Activated naive CD4-positive, alpha-beta T cell treated with anti-CD3 and anti-CD28 coated beads, Interleukin-2, amount 10 ng/mL, durations not matched to agents 7 days and 5 days (primary cell): ENCODE measurements at regions of chr19 and their contacts with region 1.

Region 1: DNA sequence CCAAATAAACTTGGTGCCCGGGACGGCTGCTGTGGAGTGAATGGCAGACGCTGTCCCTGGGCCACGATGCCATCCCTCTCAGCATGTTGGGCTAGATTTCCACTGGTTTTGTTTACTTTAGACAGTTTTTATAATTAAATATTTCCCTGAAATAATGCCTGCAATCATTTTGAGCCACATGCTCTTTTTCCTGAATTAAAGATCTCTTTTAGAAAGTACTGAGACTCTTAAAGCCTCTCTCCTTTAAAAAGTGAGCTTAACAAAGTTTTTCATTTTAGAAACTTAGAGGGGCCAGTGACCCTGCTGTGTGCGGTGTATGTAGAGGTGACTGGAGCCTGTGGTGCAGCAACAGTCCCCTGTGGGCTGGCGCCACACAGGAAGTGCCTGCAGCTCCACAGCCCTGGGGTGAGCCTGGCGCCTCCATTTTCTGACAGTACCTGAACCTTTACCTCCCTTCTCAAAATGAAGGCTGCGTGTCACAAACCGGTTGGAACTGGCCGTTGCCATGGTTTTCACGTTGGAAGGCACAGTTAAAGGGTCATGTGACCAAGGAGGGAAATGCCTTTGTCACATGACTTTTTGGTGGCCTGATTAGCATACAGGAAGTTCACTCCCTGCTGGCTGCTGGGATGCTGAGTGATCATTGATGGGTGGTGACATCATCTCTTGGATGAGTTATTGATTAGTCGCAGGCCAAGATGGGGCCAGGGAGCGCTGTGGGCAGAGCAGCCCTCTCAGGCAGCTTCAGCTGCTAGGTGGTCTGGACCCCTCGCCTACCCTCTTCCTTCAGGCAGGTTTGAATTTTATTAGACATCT is 26.3 kb downstream of the TSSK6 start:
- DNase-seq: peak; percentile 97
- H3K4me3 Mint-ChIP-seq: peak overlapping the region; percentile 54
- H3K27ac Mint-ChIP-seq: peak overlapping the region; percentile 99
- H3K4me1 Mint-ChIP-seq: peaks cover 52% of the 10 kb centered on the region
- H3K27me3 Mint-ChIP-seq: no peaks in the 10 kb centered on the region

Region 2: DNA sequence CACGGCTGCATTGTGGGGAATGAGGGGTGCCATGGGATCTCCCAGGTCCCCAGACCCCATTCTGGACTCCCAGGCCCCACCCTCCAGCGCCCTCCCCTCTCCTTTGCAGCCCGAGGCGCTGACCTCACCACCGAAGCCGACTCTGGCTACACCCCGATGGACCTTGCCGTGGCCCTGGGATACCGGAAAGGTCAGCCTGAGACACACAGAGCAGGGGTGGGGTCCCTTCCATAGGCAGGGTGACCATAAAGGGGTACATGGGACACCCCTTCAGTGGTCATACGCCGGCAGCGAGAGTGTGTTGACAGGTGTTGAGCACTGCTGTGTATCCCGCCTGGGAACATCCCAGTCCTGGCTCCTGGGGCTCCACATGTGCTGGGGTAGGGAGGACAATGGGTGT is 290.0 kb before region 1 on chr19:
- CTCF ChIA-PET with region 1: no interaction called
- DNase-seq: no peak
- H3K4me3 Mint-ChIP-seq: no peak overlapping the region
- H3K27ac Mint-ChIP-seq: no peak overlapping the region
- H3K4me1 Mint-ChIP-seq: peaks cover 33% of the 10 kb centered on the region
- H3K27me3 Mint-ChIP-seq: no peaks in the 10 kb centered on the region

Region 3: GRCh38 chr19:19361075-19361594 is 127.9 kb before region 1 on chr19:
- CTCF ChIA-PET with region 1: interaction called, 89 read pairs
- DNase-seq: peak; percentile 84
- H3K4me3 Mint-ChIP-seq: no peak overlapping the region
- H3K27ac Mint-ChIP-seq: peak overlapping the region; percentile 81
- H3K4me1 Mint-ChIP-seq: peaks cover 42% of the 10 kb centered on the region
- H3K27me3 Mint-ChIP-seq: no peaks in the 10 kb centered on the region

Region 4: GRCh38 chr19:19372656-19373416 is 116.2 kb before region 1 on chr19:
- CTCF ChIA-PET with region 1: interaction called, 89 read pairs
- DNase-seq: peak; percentile 70
- H3K4me3 Mint-ChIP-seq: peak overlapping the region; percentile 27
- H3K27ac Mint-ChIP-seq: peak overlapping the region; percentile 90
- H3K4me1 Mint-ChIP-seq: peaks cover 14% of the 10 kb centered on the region
- H3K27me3 Mint-ChIP-seq: peaks cover 7% of the 10 kb centered on the region

Region 5: DNA sequence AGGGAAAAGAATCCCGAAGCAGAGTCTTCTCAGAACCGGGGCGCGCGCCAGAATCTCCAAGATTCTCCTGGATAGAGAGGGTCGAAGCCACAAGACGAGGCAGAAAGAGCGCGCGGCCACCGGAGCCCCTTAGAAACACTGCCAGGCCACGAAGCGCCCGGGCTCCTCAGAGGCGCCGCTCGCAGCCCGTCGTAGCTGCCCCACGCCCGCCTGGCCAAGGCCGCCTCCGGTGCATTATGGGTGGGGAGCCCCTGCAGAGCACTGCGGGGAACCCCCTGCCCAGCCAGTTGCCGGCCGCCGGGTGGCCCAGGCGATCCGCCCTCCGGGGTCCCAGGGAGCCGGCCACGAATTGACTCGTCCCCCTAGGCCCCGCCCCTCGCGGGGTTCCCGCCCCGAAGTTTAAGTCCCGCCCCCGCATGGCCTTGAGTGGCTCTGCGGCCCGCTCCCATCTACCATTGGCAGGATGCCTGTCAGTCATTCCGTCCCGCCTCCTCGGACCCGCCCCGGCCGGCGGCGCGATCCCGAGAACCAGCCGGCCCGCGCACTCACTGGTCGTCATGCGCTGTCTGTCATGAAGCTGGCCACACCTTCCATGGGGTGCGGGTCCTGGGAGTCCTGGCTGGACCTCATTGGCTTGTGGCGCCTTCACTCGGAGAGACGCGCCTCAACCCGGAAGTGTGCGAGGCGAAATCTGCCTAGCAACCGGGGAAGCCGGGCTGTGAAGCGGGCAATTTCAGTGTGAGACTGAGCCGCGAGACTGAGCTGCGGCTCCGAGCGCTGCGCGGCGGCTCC is 103.8 kb before region 1 on chr19:
- CTCF ChIA-PET with region 1: interaction called, 11 read pairs
- DNase-seq: peak; percentile 100
- H3K4me3 Mint-ChIP-seq: peak overlapping the region; percentile 86
- H3K27ac Mint-ChIP-seq: peak overlapping the region; percentile 94
- H3K4me1 Mint-ChIP-seq: peaks cover 51% of the 10 kb centered on the region
- H3K27me3 Mint-ChIP-seq: peaks cover 6% of the 10 kb centered on the region

Region 6: GRCh38 chr19:19404879-19405860 is 83.9 kb before region 1 on chr19 and contains the start of gene GATAD2A:
- CTCF ChIA-PET with region 1: interaction called, 19 read pairs
- DNase-seq: peak; percentile 89
- H3K4me3 Mint-ChIP-seq: peak within 1 kb of the TSS; percentile 98
- H3K27ac Mint-ChIP-seq: peak within 1 kb of the TSS; percentile 88
- H3K4me1 Mint-ChIP-seq: peaks cover 62% of the 10 kb centered on the region
- H3K27me3 Mint-ChIP-seq: no peaks in the 10 kb centered on the region

Region 7: GRCh38 chr19:19410275-19411192 is 78.5 kb before region 1 on chr19:
- CTCF ChIA-PET with region 1: interaction called, 19 read pairs
- DNase-seq: no peak
- H3K4me3 Mint-ChIP-seq: no peak overlapping the region
- H3K27ac Mint-ChIP-seq: no peak overlapping the region
- H3K4me1 Mint-ChIP-seq: peaks cover 61% of the 10 kb centered on the region
- H3K27me3 Mint-ChIP-seq: no peaks in the 10 kb centered on the region

Region 8: DNA sequence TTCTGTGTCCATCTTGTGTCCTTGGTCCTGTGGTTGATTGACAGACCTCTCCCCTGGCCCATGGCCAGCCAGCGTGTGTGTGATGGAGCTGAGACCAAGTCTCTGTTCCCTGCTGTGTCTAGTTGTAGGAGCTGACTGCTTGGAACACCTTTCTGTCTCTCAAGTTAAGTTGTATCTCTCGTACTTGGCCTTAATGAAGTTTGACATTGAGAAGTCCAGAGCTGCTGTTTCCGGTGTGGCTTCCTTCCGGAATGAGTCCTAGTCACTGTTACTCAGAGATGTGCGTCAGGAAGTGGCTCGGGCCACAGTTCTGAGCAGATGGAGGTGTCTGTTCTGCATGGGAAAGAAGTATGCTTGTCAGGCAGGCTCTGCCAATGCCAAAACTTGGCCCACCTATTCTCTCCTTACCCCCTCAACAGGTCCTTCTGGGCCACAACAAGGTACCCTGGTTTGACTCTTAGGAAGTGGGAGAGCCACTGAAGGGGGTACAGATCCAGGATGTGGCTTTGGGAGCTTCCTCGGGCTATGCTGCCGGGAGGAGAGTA is 29.3 kb before region 1 on chr19:
- CTCF ChIA-PET with region 1: interaction called, 12 read pairs
- DNase-seq: peak; percentile 83
- H3K4me3 Mint-ChIP-seq: peak overlapping the region; percentile 80
- H3K27ac Mint-ChIP-seq: peak overlapping the region; percentile 99
- H3K4me1 Mint-ChIP-seq: peaks cover 84% of the 10 kb centered on the region
- H3K27me3 Mint-ChIP-seq: no peaks in the 10 kb centered on the region

Region 9: GRCh38 chr19:19663256-19664038 is 174.4 kb after region 1 on chr19 and contains the start of gene ATP13A1:
- CTCF ChIA-PET with region 1: no interaction called
- DNase-seq: peak; percentile 96
- H3K4me3 Mint-ChIP-seq: peak within 1 kb of the TSS; percentile 87
- H3K27ac Mint-ChIP-seq: peak within 1 kb of the TSS; percentile 96
- H3K4me1 Mint-ChIP-seq: peaks cover 41% of the 10 kb centered on the region
- H3K27me3 Mint-ChIP-seq: no peaks in the 10 kb centered on the region